Heart right ventricle (tissue), 16 donors: ENCODE measurements at regions of chr6 and their contacts with region 1.

Region 1: DNA sequence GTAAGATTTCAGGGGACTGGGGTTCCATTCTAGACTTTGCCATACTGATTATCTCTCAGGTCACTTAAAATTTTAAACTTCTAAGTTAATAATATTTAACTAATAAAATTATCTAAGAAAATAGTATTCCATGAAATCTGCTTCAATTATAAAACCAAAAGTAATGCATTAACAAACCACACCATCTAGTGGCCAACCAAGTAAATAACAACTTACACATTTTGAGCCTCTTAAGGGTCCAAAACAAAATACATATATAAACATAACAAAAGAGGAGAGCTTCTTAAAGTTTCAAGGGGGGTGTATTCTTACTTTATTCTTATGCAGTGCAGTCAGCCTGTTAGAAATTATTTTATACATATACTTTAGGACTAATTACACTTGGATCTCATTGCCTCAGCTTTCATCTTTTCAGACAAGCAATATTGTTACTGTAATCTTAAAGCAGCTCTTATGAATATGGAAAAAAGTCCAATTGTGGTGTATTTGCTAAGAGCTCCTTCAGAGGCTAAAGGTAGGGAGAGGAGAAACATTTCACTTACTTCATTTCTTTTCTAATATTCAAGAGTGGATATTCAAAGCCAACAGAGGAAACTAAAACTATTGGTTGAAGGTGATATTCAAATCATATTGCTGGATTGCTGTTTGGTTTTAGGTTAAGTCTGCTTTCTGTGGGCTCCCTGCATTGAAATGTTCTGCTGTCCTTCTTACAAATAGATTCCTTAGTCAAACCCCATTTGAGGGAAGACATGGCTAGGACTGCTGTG is 199.7 kb upstream of the SIM1 start:
- DNase-seq: no peak
- ATAC-seq: no peak
- H3K4me3 ChIP-seq: no peak overlapping the region
- H3K27ac ChIP-seq: no peak overlapping the region
- H3K4me1 ChIP-seq: peaks cover 0 to 2% (median 0%) of the 10 kb centered on the region in 9 donors
- H3K27me3 ChIP-seq: no peaks in the 10 kb centered on the region
- CTCF ChIP-seq: peak; percentile 45 to 78 (median 71)

Region 2: GRCh38 chr6:100001915-100002388 is 662.5 kb before region 1 on chr6:
- intact Hi-C with region 1: loop called in 1 of 10 experiments (anchors 10 kb)
- DNase-seq: peak; percentile 12 to 16
- ATAC-seq: peak in 2 of 8 donors; percentile 61 to 69
- H3K4me3 ChIP-seq: no peak overlapping the region
- H3K27ac ChIP-seq: no peak overlapping the region
- H3K4me1 ChIP-seq: no peaks in the 10 kb centered on the region
- H3K27me3 ChIP-seq: peaks cover 0 to 54% (median 27%) of the 10 kb centered on the region in 7 donors
- CTCF ChIP-seq: peak; percentile 59 to 94 (median 82)

Region 3: DNA sequence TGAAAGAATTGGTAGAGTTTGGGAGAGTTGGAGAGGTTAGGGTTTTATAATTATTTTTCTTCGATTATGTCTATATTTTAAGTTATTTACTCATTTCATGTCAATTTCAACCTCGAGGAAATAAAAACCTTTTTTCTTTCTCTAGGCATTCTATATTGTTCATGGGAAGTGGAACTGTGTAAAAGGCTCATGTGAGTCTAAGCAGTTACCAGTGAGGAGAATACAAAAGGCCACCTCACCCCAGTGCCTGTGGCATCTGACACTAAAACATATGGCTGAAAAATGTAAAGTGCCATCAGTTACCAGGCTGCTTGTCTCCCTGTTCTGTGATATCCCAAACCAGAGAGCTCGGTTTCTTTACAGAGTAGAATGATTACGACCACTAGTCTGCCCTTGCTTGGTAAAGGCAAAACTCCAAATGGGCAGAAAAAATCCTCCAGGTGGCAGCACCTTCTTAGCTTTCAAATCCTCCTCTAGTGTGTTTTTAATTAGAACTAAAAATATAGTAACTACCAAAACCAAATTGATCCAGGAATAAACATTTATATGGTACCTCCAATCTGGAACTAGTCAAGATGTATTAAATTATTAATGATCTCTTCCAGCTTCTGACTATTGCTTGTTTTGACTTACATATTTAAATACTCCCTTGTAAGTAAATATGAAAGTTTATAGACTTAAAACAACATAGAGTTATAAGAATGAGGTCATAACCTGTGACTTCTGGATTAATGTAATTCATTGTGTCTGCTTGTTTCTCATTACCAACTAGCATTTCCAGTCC is 547.9 kb before region 1 on chr6:
- intact Hi-C with region 1: loop called in 7 of 10 experiments (anchors 5 to 10 kb)
- DNase-seq: peak in 1 of 2 donors; percentile 29
- ATAC-seq: no peak
- H3K4me3 ChIP-seq: no peak overlapping the region
- H3K27ac ChIP-seq: no peak overlapping the region
- H3K4me1 ChIP-seq: no peaks in the 10 kb centered on the region
- H3K27me3 ChIP-seq: peaks cover 0 to 10% (median 0%) of the 10 kb centered on the region in 7 donors
- CTCF ChIP-seq: peak; percentile 34 to 72 (median 64)

Region 4: DNA sequence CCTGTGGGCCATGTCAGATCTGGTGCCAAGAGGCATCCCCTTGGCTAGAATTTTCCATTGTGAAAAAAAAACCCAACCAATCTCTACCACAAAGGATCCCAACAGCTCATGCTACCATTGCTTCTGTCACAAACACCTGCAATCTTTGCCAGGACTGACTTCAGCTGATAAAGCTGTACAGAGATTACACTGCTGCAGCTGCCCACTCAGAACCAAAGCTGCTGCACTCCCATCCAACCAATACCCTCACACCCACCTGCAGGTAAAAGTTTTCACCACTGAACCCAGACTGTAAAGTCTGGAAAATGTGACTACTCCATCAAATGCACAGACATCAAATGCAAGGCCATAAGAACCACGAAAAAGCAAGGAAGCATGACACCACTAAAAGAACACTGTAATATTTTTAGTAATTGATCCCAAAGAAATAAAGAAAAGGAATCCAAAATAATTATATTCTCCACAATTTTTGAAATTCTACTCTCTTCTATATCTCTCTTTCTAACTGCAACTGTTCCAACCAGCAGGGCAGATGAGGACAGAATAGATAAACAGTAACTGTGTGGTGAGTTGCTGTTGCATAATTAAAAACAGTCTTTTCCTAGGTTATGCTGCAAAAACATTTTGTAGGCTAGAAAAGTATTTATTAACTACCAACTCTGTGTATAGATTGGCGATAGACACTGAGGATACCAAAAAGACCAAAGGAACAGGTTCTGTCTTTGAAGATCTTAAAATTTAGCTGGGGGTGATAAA is 542.4 kb before region 1 on chr6:
- intact Hi-C with region 1: loop called in 7 of 10 experiments (anchors 5 to 10 kb)
- DNase-seq: no peak
- ATAC-seq: peak in 1 of 8 donors; percentile 28
- H3K4me3 ChIP-seq: no peak overlapping the region
- H3K27ac ChIP-seq: no peak overlapping the region
- H3K4me1 ChIP-seq: no peaks in the 10 kb centered on the region
- H3K27me3 ChIP-seq: peaks cover 0 to 4% (median 0%) of the 10 kb centered on the region in 7 donors
- CTCF ChIP-seq: no peak

Region 5: DNA sequence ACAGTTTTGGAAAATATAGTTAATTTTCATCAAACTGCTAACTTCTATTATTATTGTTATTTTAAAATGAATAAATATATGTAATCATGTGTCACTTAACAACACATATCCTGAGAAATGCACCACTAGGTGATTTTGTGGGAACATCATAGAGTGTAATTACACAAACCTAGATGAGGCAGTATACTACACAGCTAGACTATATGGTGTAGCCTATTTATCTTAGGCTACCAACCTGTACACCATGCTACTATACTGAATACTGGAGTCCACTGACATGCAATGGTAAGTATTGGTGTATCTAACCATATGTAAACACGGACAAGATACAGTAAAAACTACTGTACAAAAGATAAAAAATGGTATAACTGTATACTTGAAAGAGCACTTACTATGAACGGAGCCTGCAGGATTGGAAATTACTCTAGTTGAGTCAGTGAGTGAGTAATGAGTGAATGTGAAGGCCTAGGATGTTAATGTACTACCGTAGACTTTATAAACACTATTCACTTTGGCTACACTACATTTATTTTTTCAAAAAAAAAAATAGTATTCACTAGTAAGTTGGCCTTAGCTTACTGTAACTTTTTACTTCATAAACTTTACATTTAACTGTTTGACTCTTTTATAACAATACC is 144.3 kb after region 1 on chr6:
- intact Hi-C with region 1: no loop called
- DNase-seq: no peak
- ATAC-seq: no peak
- H3K4me3 ChIP-seq: no peak overlapping the region
- H3K27ac ChIP-seq: no peak overlapping the region
- H3K4me1 ChIP-seq: peaks cover 0 to 9% (median 0%) of the 10 kb centered on the region in 9 donors
- H3K27me3 ChIP-seq: no peaks in the 10 kb centered on the region
- CTCF ChIP-seq: no peak